ENCODE measurements at regions of chr15 and their contacts with region 1.

Region 1: GRCh38 chr15:45402162-45402954 is 24.0 kb upstream of the GATM start:
- DNase-seq: peak; percentile 96 to 98 (median 97)
- ATAC-seq: peak; percentile 95
- H3K4me3 ChIP-seq: peak overlapping the region; percentile 96
- H3K4me1 ChIP-seq: peaks cover 22% of the 10 kb centered on the region
- CTCF ChIP-seq: no peak

Region 2: DNA sequence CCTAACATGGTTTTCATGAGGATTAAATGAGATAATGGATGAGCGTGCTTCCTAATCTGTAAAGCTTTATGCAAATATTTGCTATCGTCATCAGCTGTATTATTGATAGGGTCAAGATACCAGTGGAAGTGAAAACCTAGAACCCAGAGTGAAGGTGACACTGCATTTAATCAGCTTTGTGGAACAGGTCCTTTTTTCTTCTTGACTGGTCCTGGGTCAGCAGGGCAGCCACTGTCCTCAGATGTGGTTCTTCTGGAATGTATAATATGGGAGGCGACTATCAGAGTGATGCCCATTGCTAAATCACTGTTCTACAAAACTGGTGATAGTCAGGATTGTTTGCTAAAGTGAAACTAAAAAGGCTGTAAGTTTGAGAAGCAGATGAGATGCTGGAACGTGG is 338.0 kb before region 1 on chr15:
- intact Hi-C with region 1: no loop called
- DNase-seq: no peak
- ATAC-seq: no peak
- H3K4me3 ChIP-seq: no peak overlapping the region
- H3K4me1 ChIP-seq: peaks cover 3% of the 10 kb centered on the region
- CTCF ChIP-seq: no peak

Region 3: DNA sequence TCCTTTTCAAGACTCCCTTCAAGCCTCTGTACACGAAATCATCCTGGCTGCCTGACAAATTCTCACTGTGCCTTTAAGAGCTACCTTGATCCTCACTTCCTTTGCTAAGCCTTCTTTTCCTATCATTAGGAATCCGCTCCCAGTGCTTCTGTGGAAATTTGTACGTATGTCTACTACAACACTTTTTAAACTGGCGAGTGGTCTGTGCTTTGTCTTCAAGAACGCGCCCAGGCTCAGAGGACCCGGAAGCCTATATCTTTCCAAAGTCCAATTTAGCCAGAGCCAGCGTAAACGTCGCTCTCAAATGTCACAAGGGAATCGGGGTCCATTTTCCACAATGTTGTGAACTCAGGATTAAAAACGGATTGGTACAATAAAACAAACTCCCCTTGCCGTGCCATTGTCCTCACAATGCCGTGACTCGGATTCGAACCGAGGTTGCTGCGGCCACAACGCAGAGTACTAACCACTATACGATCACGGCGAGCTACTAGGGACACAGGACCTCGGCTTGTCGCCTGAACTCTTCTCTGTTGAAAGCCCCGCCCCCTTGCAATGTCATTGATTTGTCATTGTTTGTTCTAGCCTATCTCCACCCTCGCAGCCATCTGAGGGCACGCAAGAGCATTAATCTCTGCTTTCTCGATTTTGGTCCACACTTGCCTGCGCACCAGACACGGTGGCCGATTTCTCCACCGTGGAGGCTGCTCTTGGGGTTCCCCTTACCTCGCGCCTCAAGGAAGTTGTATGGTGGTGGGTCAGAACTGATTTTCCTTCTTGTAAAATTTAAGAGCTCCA is 202.2 kb before region 1 on chr15:
- intact Hi-C with region 1: loop called in 1 of 2 experiments (anchors 10 kb)
- DNase-seq: peak; percentile 93 to 99 (median 96)
- ATAC-seq: peak; percentile 81
- H3K4me3 ChIP-seq: peak overlapping the region; percentile 15
- H3K4me1 ChIP-seq: no peaks in the 10 kb centered on the region
- CTCF ChIP-seq: no peak

Region 4: DNA sequence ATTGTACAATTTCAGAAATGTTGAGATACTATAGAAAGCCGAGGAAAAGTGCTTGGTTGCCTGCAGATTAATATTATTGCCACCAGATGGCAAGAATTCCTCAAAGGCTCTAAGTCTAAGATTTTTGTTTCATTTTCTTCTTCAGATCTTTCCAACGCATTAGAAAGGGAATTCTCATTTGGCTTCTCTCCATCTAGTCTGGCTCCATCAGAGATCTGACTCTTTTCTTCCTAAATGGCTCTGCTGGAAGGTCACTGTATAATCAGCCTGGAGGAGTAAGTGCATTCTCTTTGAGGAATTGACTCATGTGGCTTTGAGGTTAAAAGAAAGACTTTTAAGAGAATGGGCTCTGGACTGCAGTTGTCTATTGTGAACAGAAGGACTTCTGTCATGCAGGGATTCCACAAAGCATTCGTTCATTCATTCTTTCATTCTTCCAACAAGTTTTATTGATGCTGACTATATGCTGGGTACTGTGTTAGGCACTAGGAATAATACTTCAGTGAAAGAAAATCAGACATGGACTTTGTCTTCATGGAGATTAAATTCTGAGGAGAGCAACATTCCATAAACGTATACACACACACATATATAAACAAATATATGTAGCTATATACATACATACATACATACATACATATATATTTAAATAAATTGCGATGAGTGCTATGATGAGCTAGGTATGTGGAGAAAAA is 95.0 kb before region 1 on chr15:
- intact Hi-C with region 1: loop called (anchors 5 to 10 kb)
- DNase-seq: peak in 1 of 3 donors; percentile 33
- ATAC-seq: peak; percentile 76
- H3K4me3 ChIP-seq: no peak overlapping the region
- H3K4me1 ChIP-seq: no peaks in the 10 kb centered on the region
- CTCF ChIP-seq: peak; percentile 32

Measured in mucosa of descending colon (tissue), 3 donors.